ENCODE measurements at regions of chr22 and their contacts with region 1.

Region 1: DNA sequence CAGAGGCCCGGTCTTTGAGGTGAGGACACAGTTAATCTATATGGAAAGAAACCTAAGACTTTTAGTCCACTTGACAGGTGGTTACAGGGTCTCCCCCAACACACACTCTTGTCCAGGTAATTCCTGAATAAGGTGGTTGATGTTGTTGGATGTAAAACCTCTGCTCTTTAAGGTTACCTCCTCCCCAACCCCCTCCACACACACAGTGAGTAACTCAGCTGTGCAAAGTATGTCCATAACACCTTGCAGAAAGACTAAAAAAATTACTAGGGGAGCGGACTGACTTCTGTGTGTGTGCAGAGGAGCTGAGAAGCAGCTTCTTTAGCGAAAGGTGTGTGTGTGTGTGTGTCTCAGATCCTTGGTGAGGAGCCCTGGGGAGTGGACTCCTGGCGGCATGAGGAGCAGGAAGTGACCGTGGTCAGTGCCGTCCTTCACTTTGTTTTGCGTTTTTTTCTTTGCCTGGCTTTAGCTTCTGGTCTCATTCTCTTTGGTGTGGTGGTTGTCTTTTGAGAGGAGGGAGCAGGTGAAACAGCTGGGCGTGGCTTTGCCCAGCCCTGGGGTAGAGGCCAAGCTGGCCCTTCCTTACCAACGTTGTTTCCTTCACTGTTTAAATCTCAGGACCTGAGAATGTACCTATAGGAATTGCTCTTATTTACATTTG is 1.7 kb downstream of the ZBED4 start:
- DNase-seq: no peak
- ATAC-seq: no peak

Region 2: GRCh38 chr22:49536571-49537131 is 318.7 kb before region 1 on chr22:
- intact Hi-C with region 1: no loop called
- DNase-seq: no peak
- ATAC-seq: no peak

Region 3: GRCh38 chr22:49657275-49657975 is 198.0 kb before region 1 on chr22:
- intact Hi-C with region 1: no loop called
- DNase-seq: peak; percentile 68
- ATAC-seq: peak; percentile 78 to 85

Region 4: DNA sequence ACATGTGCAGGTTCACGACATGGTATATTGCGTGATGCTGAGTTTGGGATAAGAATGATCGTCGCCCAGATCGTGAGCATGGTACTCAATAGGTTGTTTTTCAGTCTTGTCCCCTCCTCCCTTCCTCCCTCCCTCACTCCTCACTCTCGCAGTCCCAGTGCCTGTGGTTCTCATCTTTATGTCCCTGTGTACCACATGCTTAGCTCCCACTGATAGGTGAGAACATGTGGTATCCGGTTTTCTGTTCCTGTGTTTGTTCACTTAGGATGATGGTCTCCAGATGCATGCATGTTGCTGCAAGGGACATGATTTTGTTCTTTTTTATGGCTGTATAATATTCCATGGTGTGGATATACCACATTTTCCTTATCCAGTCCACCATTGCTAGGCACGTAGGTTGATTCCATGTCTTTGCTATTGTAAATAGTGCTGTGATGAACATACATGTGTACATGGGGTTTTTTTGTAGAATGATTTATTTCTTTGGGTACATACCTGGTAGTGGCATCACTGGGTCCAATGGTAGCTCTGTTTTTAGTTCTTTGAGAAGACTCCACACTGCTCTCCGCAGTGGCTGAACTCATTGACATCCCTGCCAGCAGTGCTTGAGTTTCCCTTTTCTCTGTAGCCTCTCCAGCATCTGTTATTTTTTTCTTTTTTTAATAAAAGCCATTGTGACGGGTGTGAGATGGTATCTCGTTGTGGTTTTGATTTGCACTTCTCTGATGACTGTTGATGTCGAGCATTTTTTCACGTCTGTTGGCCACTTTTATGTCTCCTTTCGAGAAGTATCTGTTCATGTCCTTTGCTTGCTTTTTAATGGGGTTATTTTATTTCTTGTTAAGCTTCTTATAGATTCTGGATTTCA is 14.7 kb after region 1 on chr22:
- intact Hi-C with region 1: no loop called
- DNase-seq: no peak
- ATAC-seq: peak in 1 of 2 donors; percentile 34

Region 5: DNA sequence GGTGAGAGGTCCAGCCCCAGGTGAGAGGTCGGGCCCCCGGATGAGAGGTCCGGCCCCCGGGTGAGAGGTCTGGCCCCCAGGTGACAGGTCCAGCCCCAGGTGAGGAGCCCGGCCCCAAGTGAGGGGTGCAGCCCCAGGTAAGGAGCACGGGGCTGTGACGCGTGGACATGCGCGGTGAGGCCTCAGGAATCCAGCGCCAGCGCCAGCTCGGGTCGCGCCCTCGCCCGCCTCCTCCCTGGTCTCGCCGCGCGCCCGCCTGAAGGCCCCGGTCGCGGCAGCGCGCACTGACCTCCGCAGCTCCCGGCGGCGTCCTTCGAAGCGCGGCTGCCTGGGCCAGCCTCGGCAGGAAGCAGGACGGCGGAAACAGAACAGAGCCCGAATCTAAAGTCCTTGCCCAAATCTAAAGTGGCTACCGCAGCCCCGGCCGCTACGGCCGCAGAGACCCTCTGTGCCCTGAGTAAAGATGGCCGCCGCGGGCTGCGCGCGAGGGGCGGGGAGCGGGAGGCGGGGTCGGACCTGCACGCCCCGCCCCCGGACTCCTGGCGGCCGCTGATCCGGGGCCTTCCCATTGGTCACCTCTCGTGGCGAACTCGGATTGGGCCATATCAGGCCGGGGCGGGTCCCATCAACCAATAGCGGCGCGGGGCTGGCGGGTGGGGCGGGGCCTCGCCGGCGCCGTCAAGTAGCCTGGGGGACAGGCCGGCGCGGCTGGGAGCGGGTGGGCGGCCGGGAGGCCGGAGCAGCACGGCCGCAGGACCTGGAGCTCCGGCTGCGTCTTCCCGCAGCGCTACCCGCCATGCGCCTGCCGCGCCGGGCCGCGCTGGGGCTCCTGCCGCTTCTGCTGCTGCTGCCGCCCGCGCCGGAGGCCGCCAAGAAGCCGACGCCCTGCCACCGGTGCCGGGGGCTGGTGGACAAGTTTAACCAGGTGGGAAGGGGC is 62.9 kb after region 1 on chr22 and contains the starts of genes ALG12 and CRELD2:
- intact Hi-C with region 1: loop called in 1 of 2 experiments (anchors 5 kb)
- DNase-seq: peak; percentile 99
- ATAC-seq: peak; percentile 98 to 99
- total RNA-seq, gene ALG12: 15.3 to 15.9 TPM
- total RNA-seq, gene CRELD2: 30.1 to 43.7 TPM

Measured in left cardiac atrium (tissue), 4 donors.